ENCODE measurements at regions of chr21 and their contacts with region 1.

Region 1: DNA sequence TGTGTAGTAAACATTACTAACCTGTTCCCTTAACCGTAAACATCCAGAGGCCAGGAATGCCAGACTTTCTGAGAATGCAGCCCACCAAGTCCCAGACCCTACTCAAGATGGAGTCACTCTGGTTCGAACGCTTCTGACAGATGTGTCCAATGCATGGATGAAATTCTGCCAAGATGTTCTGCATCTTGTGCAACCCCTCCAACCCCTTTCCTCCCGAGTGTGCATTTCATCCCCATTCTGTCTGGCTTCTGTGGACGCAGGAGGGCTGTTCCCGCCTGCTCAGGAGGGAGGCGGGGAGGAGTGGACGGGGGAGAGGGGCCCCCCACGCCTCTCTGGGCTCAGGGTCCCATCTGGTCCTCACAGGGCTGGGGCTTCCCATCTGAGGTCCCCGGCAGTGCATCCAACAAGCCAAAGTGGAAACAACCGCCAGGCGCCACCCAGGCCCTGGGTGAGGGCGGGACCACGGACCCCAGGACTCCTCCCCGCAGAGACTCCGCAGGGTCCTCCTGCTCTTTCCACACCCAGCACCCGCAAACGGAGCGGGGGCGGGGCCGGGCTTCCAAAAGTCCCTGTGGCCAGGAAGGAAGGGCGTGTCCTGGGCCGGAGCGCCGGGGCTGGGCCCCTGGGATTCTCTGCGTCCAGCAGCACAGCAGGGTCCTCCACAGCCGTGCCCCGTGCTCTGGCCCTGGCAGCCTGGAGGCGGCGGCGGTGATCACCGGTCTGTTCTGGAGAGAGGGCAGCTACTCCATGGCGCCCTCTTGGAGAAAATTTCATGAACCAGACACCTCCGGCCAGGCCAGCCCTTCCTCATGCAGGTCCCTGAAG is 27.7 kb upstream of the SUMO3 start:
- DNase-seq: peak; percentile 36 to 77
- H3K4me3 ChIP-seq: peak overlapping the region; percentile 39 to 57
- H3K27ac ChIP-seq: no peak overlapping the region
- H3K4me1 ChIP-seq: peaks cover 5 to 9% of the 10 kb centered on the region in 2 donors
- H3K27me3 ChIP-seq: no peaks in the 10 kb centered on the region
- CTCF ChIP-seq: peak in 1 of 3 experiments; percentile 32

Region 2: GRCh38 chr21:44865561-44866280 is 20.1 kb after region 1 on chr21:
- intact Hi-C with region 1: loop called (anchors 2 kb)
- DNase-seq: no peak
- H3K4me3 ChIP-seq: no peak overlapping the region
- H3K27ac ChIP-seq: peak overlapping the region; percentile 9 to 55
- H3K4me1 ChIP-seq: peaks cover 29 to 55% of the 10 kb centered on the region in 2 donors
- H3K27me3 ChIP-seq: no peaks in the 10 kb centered on the region
- CTCF ChIP-seq: no peak

Region 3: GRCh38 chr21:45209046-45209445 is 363.4 kb after region 1 on chr21:
- intact Hi-C with region 1: no loop called
- DNase-seq: no peak
- H3K4me3 ChIP-seq: no peak overlapping the region
- H3K27ac ChIP-seq: peak overlapping the region in 1 of 2 donors; percentile 40
- H3K4me1 ChIP-seq: no peaks in the 10 kb centered on the region
- H3K27me3 ChIP-seq: no peaks in the 10 kb centered on the region
- CTCF ChIP-seq: no peak

Measured in ascending aorta (tissue), 2 donors.